MCF 10A (cell line): ENCODE measurements at regions of chr4 and their contacts with region 1.

Region 1: DNA sequence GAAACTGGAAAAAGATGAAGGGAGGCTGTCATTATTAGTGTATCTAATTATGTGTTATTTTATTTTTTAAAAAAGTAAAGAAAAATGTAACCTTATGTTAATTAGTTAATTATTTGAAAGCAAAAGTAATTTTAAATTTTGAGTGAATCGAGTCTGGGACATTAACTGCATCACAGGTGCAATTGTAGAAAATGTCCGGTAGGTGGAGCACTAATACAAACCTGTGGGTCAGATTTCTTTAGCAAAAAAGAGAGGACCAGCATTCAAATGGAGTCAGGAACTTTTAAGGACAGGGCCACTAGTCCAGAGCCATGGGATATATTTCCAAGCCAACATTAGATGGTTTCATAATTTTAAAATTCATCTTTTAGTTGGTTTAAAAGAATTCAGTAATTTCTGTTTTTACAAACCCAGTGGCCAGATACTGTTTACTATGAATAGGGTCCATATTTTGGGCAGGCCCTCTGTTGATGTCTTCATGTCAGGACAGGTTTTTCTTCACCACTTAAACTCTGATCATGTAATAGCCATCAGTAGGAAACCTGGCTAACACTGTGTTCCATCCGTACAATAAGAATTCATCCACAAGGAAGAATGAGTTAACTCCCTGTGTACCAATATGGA is 27.2 kb downstream of the BST1 start:
- DNase-seq: peak; percentile 67
- H3K4me3 Mint-ChIP-seq: no peak overlapping the region
- H3K27ac Mint-ChIP-seq: no peak overlapping the region
- H3K4me1 Mint-ChIP-seq: no peaks in the 10 kb centered on the region
- H3K27me3 Mint-ChIP-seq: peaks cover 17% of the 10 kb centered on the region
- CTCF ChIP-seq: peak; percentile 65

Region 2: DNA sequence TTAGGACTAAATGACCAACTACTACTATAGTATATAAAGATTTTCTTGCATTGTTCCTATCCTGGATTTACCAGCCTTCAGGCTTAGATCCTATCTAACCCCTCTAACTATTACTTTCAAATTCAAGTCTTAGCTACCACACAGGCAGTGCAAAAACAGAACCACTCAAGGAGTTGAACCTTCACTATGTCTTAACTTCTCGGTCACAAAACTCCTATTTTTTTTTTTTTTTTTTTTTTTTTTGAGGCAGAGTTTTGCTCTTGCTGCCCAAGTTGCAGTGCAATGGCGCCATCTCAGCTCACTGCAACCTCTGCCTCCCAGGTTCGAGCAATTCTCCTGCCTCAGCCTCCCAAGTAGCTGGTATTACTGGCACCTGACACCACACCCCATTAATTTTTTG is 54.7 kb before region 1 on chr4:
- CTCF ChIA-PET with region 1: no interaction called
- POLR2A ChIA-PET with region 1: no interaction called
- intact Hi-C with region 1: no loop called
- DNase-seq: no peak
- H3K4me3 Mint-ChIP-seq: no peak overlapping the region
- H3K27ac Mint-ChIP-seq: no peak overlapping the region
- H3K4me1 Mint-ChIP-seq: peaks cover 37% of the 10 kb centered on the region
- H3K27me3 Mint-ChIP-seq: no peaks in the 10 kb centered on the region
- CTCF ChIP-seq: no peak

Region 3: DNA sequence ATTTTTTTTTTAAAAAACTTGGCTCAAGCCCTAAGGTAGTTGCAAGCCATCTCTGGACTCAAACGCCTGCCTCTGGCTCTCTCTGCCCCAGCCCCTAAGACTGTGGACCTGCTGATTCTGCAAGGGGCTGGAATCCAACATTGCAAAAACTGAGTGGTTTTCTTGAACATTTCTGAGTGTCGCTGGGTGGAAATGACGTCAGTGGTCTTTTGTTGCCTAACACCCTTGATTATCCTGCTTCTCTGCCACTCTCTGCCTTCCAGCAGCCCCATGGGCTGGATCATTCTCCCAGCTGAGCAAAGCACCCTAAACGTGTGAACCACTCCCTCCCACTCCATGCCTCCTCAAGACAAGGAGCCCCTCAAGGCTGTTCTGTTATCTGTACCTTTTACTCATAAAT is 10.5 kb before region 1 on chr4:
- CTCF ChIA-PET with region 1: interaction called, 14 read pairs
- POLR2A ChIA-PET with region 1: no interaction called
- intact Hi-C with region 1: no loop called
- DNase-seq: peak; percentile 55
- H3K4me3 Mint-ChIP-seq: no peak overlapping the region
- H3K27ac Mint-ChIP-seq: no peak overlapping the region
- H3K4me1 Mint-ChIP-seq: peaks cover 9% of the 10 kb centered on the region
- H3K27me3 Mint-ChIP-seq: no peaks in the 10 kb centered on the region
- CTCF ChIP-seq: no peak

Region 4: DNA sequence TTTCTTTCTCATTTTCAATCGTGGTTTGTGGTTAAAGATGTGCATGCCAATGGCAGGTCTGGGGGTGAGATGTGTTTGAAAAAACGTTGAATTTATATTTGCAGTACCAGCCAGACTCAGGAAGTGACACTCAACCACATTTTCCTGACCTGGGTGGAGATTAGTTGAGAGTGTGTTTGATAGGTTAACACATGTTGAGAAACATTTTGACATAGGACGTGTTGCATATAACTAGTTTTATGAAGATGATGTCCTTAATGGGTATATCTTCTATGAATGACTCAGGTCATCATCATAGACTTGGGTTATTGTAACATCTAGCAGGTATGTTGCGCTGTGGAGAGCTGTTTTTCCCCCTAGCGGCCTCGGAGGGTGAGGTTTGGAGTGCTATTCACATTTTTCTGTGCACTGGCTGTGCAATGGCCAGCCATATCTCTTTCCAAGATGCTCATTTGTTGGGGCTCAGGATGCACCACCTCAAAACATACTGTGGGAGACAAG is 26.4 kb after region 1 on chr4:
- CTCF ChIA-PET with region 1: no interaction called
- POLR2A ChIA-PET with region 1: no interaction called
- intact Hi-C with region 1: loop called (anchors 1 kb)
- DNase-seq: peak; percentile 82
- H3K4me3 Mint-ChIP-seq: no peak overlapping the region
- H3K27ac Mint-ChIP-seq: no peak overlapping the region
- H3K4me1 Mint-ChIP-seq: peaks cover 5% of the 10 kb centered on the region
- H3K27me3 Mint-ChIP-seq: no peaks in the 10 kb centered on the region
- CTCF ChIP-seq: peak; percentile 50

Region 5: GRCh38 chr4:15836362-15836761 is 106.3 kb after region 1 on chr4:
- CTCF ChIA-PET with region 1: no interaction called
- POLR2A ChIA-PET with region 1: no interaction called
- intact Hi-C with region 1: no loop called
- DNase-seq: peak; percentile 39
- H3K4me3 Mint-ChIP-seq: no peak overlapping the region
- H3K27ac Mint-ChIP-seq: no peak overlapping the region
- H3K4me1 Mint-ChIP-seq: no peaks in the 10 kb centered on the region
- H3K27me3 Mint-ChIP-seq: no peaks in the 10 kb centered on the region
- CTCF ChIP-seq: no peak